ENCODE measurements at regions of chr22 and their contacts with region 1.

Region 1: GRCh38 chr22:16917144-16918003 is 90.6 kb downstream of the GAB4 start:
- DNase-seq: peak; percentile 75
- H3K4me3 Mint-ChIP-seq: no peak overlapping the region
- H3K27ac Mint-ChIP-seq: no peak overlapping the region
- H3K4me1 Mint-ChIP-seq: peaks cover 7% of the 10 kb centered on the region
- H3K27me3 Mint-ChIP-seq: peaks cover 15% of the 10 kb centered on the region
- CTCF ChIP-seq: peak; percentile 60

Region 2: GRCh38 chr22:16717699-16718558 is 199.4 kb before region 1 on chr22:
- CTCF ChIA-PET with region 1: no interaction called
- POLR2A ChIA-PET with region 1: no interaction called
- intact Hi-C with region 1: no loop called
- DNase-seq: no peak
- H3K4me3 Mint-ChIP-seq: no peak overlapping the region
- H3K27ac Mint-ChIP-seq: no peak overlapping the region
- H3K4me1 Mint-ChIP-seq: no peaks in the 10 kb centered on the region
- H3K27me3 Mint-ChIP-seq: peaks cover 10% of the 10 kb centered on the region
- CTCF ChIP-seq: no peak

Region 3: GRCh38 chr22:16804882-16805281 is 112.5 kb before region 1 on chr22:
- CTCF ChIA-PET with region 1: no interaction called
- POLR2A ChIA-PET with region 1: no interaction called
- intact Hi-C with region 1: no loop called
- DNase-seq: no peak
- H3K4me3 Mint-ChIP-seq: no peak overlapping the region
- H3K27ac Mint-ChIP-seq: no peak overlapping the region
- H3K4me1 Mint-ChIP-seq: peaks cover 13% of the 10 kb centered on the region
- H3K27me3 Mint-ChIP-seq: no peaks in the 10 kb centered on the region
- CTCF ChIP-seq: no peak

Region 4: GRCh38 chr22:16932577-16932976 is 15.2 kb after region 1 on chr22:
- CTCF ChIA-PET with region 1: interaction called, 25 read pairs
- POLR2A ChIA-PET with region 1: no interaction called
- intact Hi-C with region 1: no loop called
- DNase-seq: peak; percentile 37
- H3K4me3 Mint-ChIP-seq: no peak overlapping the region
- H3K27ac Mint-ChIP-seq: no peak overlapping the region
- H3K4me1 Mint-ChIP-seq: no peaks in the 10 kb centered on the region
- H3K27me3 Mint-ChIP-seq: peaks cover 63% of the 10 kb centered on the region
- CTCF ChIP-seq: peak; percentile 19

Region 5: GRCh38 chr22:17063411-17064106 is 146.2 kb after region 1 on chr22:
- CTCF ChIA-PET with region 1: interaction called, 107 read pairs
- POLR2A ChIA-PET with region 1: interaction called, 8 read pairs
- intact Hi-C with region 1: loop called (anchors 1 kb)
- DNase-seq: no peak
- H3K4me3 Mint-ChIP-seq: no peak overlapping the region
- H3K27ac Mint-ChIP-seq: no peak overlapping the region
- H3K4me1 Mint-ChIP-seq: no peaks in the 10 kb centered on the region
- H3K27me3 Mint-ChIP-seq: no peaks in the 10 kb centered on the region
- CTCF ChIP-seq: no peak

Measured in MCF 10A (cell line).